ENCODE measurements at regions of chr9 and their contacts with region 1.

Region 1: DNA sequence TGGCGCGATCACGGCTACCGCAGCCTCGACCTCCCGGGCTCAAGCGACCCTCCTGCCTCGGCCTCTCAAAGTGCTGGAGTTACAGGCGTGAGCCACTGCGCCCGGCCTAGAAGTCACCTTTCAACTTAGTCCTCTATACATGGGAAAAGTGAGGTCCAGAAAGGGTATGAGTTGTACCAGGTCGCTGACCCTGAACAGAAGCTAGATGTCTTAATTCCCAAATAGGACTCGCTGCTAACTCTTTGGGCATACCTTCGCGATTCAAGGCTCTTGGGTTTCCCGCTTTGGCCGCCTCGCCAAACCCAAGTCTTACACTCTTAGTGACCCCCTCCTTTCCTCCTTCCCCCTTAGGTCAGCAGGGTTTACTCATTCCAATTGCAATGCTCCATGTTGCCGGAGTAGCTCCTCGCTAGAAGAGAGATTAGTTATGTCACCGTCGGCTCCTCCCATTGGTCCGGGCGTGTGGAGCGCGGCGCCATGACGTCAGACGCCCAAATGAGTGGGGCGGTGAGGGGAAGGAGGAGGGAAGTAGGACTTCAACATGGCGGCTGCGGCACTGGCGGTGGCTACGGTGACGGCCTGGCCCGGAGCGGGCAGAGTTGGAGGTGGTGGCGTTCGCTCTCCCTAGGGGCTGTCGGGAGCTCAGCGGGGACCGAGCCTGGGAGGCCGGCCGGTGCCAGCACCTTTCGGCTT is at the start of gene UBAP1:
- DNase-seq: peak; percentile 97
- ATAC-seq: peak; percentile 99
- H3K4me3 ChIP-seq: peak within 1 kb of the TSS; percentile 64
- H3K27ac ChIP-seq: peak within 1 kb of the TSS; percentile 93
- H3K4me1 ChIP-seq: no peaks in the 10 kb centered on the region
- H3K27me3 ChIP-seq: no peaks in the 10 kb centered on the region
- CTCF ChIP-seq: no peak
- POLR2A ChIP-seq: peak; percentile 92
- RAD21 ChIP-seq: no peak
- total RNA-seq, gene UBAP1: 28.3 and 30.6 TPM in 2 replicates

Region 2: DNA sequence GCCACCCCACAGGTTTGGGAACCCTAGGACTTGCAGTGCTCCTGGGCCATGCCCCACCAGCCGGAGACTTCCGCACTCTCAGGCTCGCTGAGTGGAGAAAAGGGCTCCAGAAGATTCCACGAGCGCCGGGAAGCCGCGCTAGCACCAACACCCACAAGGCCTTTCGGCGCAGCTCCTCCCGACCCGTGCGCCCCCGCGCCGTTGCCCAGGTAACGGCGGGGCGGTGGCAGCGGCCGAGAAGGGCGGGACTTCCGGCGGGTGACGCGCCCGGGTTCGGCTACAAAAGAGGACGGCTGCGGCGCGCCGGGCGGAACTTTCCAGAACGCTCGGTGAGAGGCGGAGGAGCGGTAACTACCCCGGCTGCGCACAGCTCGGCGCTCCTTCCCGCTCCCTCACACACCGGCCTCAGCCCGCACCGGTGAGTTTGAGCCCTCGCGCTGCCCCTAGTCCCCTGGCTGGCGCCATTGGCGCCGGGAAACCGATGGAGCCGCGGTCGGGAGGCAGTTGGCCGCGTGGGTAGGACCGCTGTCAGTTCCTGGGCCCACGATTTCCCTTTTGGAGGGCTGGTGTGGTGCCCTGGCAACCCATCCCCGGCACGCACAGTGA is 1153.6 kb before region 1 on chr9 and contains the start of gene DNAJA1:
- CTCF ChIA-PET with region 1: no interaction called
- POLR2A ChIA-PET with region 1: interaction called, 16 read pairs
- dilution Hi-C with region 1: no loop called
- in situ Hi-C with region 1: no loop called
- intact Hi-C with region 1: no loop called
- DNase-seq: peak; percentile 91
- ATAC-seq: peak; percentile 87
- H3K4me3 ChIP-seq: peak within 1 kb of the TSS; percentile 90
- H3K27ac ChIP-seq: peak within 1 kb of the TSS; percentile 89
- H3K4me1 ChIP-seq: peaks cover 8% of the 10 kb centered on the region
- H3K27me3 ChIP-seq: no peaks in the 10 kb centered on the region
- CTCF ChIP-seq: no peak
- POLR2A ChIP-seq: peak; percentile 100
- RAD21 ChIP-seq: no peak
- total RNA-seq, gene DNAJA1: 59.5 and 109 TPM in 2 replicates

Region 3: GRCh38 chr9:33101108-33101951 is 1077.3 kb before region 1 on chr9:
- CTCF ChIA-PET with region 1: no interaction called
- POLR2A ChIA-PET with region 1: no interaction called
- dilution Hi-C with region 1: no loop called
- in situ Hi-C with region 1: no loop called
- intact Hi-C with region 1: no loop called
- DNase-seq: peak; percentile 39
- ATAC-seq: peak; percentile 68
- H3K4me3 ChIP-seq: no peak overlapping the region
- H3K27ac ChIP-seq: peak overlapping the region; percentile 39
- H3K4me1 ChIP-seq: peaks cover 13% of the 10 kb centered on the region
- H3K27me3 ChIP-seq: no peaks in the 10 kb centered on the region
- CTCF ChIP-seq: no peak
- POLR2A ChIP-seq: no peak
- RAD21 ChIP-seq: no peak

Region 4: GRCh38 chr9:34318163-34318790 is 139.6 kb after region 1 on chr9:
- CTCF ChIA-PET with region 1: no interaction called
- POLR2A ChIA-PET with region 1: interaction called, 10 read pairs
- dilution Hi-C with region 1: no loop called
- in situ Hi-C with region 1: no loop called
- intact Hi-C with region 1: no loop called
- DNase-seq: no peak
- ATAC-seq: no peak
- H3K4me3 ChIP-seq: no peak overlapping the region
- H3K27ac ChIP-seq: no peak overlapping the region
- H3K4me1 ChIP-seq: no peaks in the 10 kb centered on the region
- H3K27me3 ChIP-seq: no peaks in the 10 kb centered on the region
- CTCF ChIP-seq: no peak
- POLR2A ChIP-seq: no peak
- RAD21 ChIP-seq: no peak